Activated B cell treated with CpG ODN at 0.5 μM for 24 hours (primary cell): ENCODE measurements at regions of chr16 and their contacts with region 1.

Region 1: GRCh38 chr16:23556881-23557778 is at the starts of genes EARS2 and UBFD1:
- DNase-seq: peak; percentile 98
- ATAC-seq: peak; percentile 89
- H3K4me3 Mint-ChIP-seq: peak within 1 kb of the TSS; percentile 93
- H3K27ac Mint-ChIP-seq: peak within 1 kb of the TSS; percentile 89
- H3K4me1 Mint-ChIP-seq: peaks cover 30% of the 10 kb centered on the region
- H3K27me3 Mint-ChIP-seq: no peaks in the 10 kb centered on the region
- CTCF ChIP-seq: no peak
- total RNA-seq, gene EARS2: 24.9 and 27.5 TPM in 2 replicates
- total RNA-seq, gene UBFD1: 47.9 and 52.2 TPM in 2 replicates

Region 2: GRCh38 chr16:23149349-23149996 is 407.7 kb before region 1 on chr16 and contains the start of gene USP31:
- CTCF ChIA-PET with region 1: no interaction called
- POLR2A ChIA-PET with region 1: no interaction called
- intact Hi-C with region 1: loop called (anchors 1 kb)
- DNase-seq: peak; percentile 82
- ATAC-seq: peak; percentile 96
- H3K4me3 Mint-ChIP-seq: peak within 1 kb of the TSS; percentile 91
- H3K27ac Mint-ChIP-seq: peak within 1 kb of the TSS; percentile 81
- H3K4me1 Mint-ChIP-seq: peaks cover 11% of the 10 kb centered on the region
- H3K27me3 Mint-ChIP-seq: peaks cover 3% of the 10 kb centered on the region
- CTCF ChIP-seq: no peak
- total RNA-seq, gene USP31: 3.6 and 4.6 TPM in 2 replicates

Region 3: GRCh38 chr16:23452572-23453337 is 104.4 kb before region 1 on chr16 and contains the start of gene COG7:
- CTCF ChIA-PET with region 1: no interaction called
- POLR2A ChIA-PET with region 1: interaction called, 3 read pairs
- intact Hi-C with region 1: loop called (anchors 1 kb)
- DNase-seq: peak; percentile 86
- ATAC-seq: peak; percentile 88
- H3K4me3 Mint-ChIP-seq: peak within 1 kb of the TSS; percentile 93
- H3K27ac Mint-ChIP-seq: peak within 1 kb of the TSS; percentile 83
- H3K4me1 Mint-ChIP-seq: peaks cover 20% of the 10 kb centered on the region
- H3K27me3 Mint-ChIP-seq: no peaks in the 10 kb centered on the region
- CTCF ChIP-seq: no peak
- total RNA-seq, gene COG7: 19.3 and 20.2 TPM in 2 replicates

Region 4: GRCh38 chr16:23510164-23510914 is 46.8 kb before region 1 on chr16 and contains the start of gene GGA2:
- CTCF ChIA-PET with region 1: interaction called, 13 read pairs
- POLR2A ChIA-PET with region 1: interaction called, 14 read pairs
- intact Hi-C with region 1: loop called (anchors 1 kb)
- DNase-seq: peak; percentile 77
- ATAC-seq: peak; percentile 75
- H3K4me3 Mint-ChIP-seq: peak within 1 kb of the TSS; percentile 90
- H3K27ac Mint-ChIP-seq: peak within 1 kb of the TSS; percentile 95
- H3K4me1 Mint-ChIP-seq: peaks cover 59% of the 10 kb centered on the region
- H3K27me3 Mint-ChIP-seq: no peaks in the 10 kb centered on the region
- CTCF ChIP-seq: no peak
- total RNA-seq, gene GGA2: 264 and 281 TPM in 2 replicates

Region 5: GRCh38 chr16:23595951-23596720 is 39.0 kb after region 1 on chr16 and contains the start of gene NDUFAB1:
- CTCF ChIA-PET with region 1: interaction called, 28 read pairs
- POLR2A ChIA-PET with region 1: interaction called, 15 read pairs
- intact Hi-C with region 1: loop called (anchors 1 kb)
- DNase-seq: peak; percentile 95
- ATAC-seq: peak; percentile 99
- H3K4me3 Mint-ChIP-seq: peak within 1 kb of the TSS; percentile 88
- H3K27ac Mint-ChIP-seq: peak within 1 kb of the TSS; percentile 65
- H3K4me1 Mint-ChIP-seq: peaks cover 28% of the 10 kb centered on the region
- H3K27me3 Mint-ChIP-seq: no peaks in the 10 kb centered on the region
- CTCF ChIP-seq: peak; percentile 89
- total RNA-seq, gene NDUFAB1: 68.4 and 74.5 TPM in 2 replicates

Region 6: DNA sequence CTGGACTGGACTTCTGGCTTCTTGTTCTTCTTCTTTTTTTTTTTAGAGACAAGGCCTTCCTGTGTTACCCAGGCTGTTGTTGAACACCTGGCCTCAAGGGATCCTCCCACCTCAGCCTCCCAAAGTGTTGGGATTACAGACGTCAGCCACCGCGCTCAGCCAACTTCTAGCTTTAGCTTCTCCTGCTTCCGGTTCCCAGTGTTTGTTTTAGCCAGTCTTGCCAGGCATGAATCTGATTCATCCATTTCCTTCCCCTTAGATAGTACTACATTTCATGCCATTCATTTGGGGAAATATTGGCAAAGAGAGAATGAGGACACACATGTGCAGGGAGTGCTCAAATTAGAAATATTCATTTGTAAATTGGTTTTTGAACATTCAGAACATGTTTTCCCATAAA is 51.1 kb after region 1 on chr16:
- CTCF ChIA-PET with region 1: no interaction called
- POLR2A ChIA-PET with region 1: no interaction called
- intact Hi-C with region 1: no loop called
- DNase-seq: no peak
- ATAC-seq: no peak
- H3K4me3 Mint-ChIP-seq: no peak overlapping the region
- H3K27ac Mint-ChIP-seq: no peak overlapping the region
- H3K4me1 Mint-ChIP-seq: no peaks in the 10 kb centered on the region
- H3K27me3 Mint-ChIP-seq: no peaks in the 10 kb centered on the region
- CTCF ChIP-seq: no peak

Region 7: GRCh38 chr16:23694644-23695373 is 137.7 kb after region 1 on chr16:
- CTCF ChIA-PET with region 1: no interaction called
- POLR2A ChIA-PET with region 1: no interaction called
- intact Hi-C with region 1: no loop called
- DNase-seq: no peak
- ATAC-seq: no peak
- H3K4me3 Mint-ChIP-seq: peak overlapping the region; percentile 66
- H3K27ac Mint-ChIP-seq: no peak overlapping the region
- H3K4me1 Mint-ChIP-seq: peaks cover 17% of the 10 kb centered on the region
- H3K27me3 Mint-ChIP-seq: peaks cover 4% of the 10 kb centered on the region
- CTCF ChIP-seq: no peak

Region 8: DNA sequence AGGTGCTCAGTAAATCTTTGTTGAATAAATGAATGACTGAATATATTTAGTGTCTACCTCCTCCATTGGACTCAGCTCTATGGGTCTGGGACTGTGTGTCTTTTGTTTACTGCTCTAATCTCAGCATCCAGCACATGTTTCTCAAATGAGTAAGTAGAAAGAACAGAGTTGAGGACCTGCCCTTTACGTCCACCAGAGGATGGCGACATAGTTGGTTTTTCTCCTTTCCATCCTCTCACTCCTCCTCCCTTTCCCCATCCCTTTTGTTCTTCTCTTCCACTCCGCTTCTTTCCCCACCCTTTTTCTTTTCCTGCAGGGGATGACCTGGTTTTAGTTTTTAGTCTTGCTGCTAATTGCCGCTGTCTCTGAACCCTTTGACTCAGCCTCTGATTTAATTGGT is 185.6 kb after region 1 on chr16:
- CTCF ChIA-PET with region 1: no interaction called
- POLR2A ChIA-PET with region 1: no interaction called
- intact Hi-C with region 1: no loop called
- DNase-seq: no peak
- ATAC-seq: no peak
- H3K4me3 Mint-ChIP-seq: no peak overlapping the region
- H3K27ac Mint-ChIP-seq: no peak overlapping the region
- H3K4me1 Mint-ChIP-seq: no peaks in the 10 kb centered on the region
- H3K27me3 Mint-ChIP-seq: peaks cover 48% of the 10 kb centered on the region
- CTCF ChIP-seq: no peak

Region 9: DNA sequence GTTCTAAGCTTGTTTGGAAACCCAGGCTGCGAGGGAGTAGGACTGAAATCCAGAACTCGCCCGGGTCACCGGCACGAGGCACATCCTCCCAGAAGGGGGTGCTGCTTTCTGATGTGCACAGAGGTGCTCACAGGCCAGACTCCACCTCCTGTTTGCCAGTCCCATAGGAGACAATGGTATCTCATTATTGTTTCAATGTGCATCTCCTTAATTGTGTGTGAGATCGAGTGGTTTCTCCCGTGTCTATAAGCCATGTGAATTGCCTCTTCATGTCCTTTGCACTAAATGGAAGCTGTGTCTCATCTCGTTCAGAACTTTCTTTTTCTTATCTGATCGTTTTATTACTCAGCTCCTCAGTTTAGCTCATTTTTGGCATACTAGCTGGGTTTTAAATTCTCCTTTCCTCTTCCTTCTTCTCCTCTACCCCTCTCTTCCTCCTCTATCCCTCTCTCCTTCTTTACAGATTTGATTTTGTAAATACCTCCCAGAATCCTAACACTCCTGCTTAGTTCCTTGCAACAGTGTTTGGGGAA is 246.5 kb after region 1 on chr16:
- CTCF ChIA-PET with region 1: no interaction called
- POLR2A ChIA-PET with region 1: no interaction called
- intact Hi-C with region 1: no loop called
- DNase-seq: peak; percentile 48
- ATAC-seq: peak; percentile 82
- H3K4me3 Mint-ChIP-seq: peak overlapping the region; percentile 51
- H3K27ac Mint-ChIP-seq: peak overlapping the region; percentile 26
- H3K4me1 Mint-ChIP-seq: peaks cover 47% of the 10 kb centered on the region
- H3K27me3 Mint-ChIP-seq: no peaks in the 10 kb centered on the region
- CTCF ChIP-seq: no peak

Region 10: GRCh38 chr16:24539291-24539849 is 982.2 kb after region 1 on chr16 and contains the start of gene RBBP6:
- CTCF ChIA-PET with region 1: no interaction called
- POLR2A ChIA-PET with region 1: interaction called, 3 read pairs
- intact Hi-C with region 1: loop called (anchors 1 kb)
- DNase-seq: peak; percentile 96
- ATAC-seq: peak; percentile 92
- H3K4me3 Mint-ChIP-seq: peak within 1 kb of the TSS; percentile 100
- H3K27ac Mint-ChIP-seq: peak within 1 kb of the TSS; percentile 100
- H3K4me1 Mint-ChIP-seq: peaks cover 43% of the 10 kb centered on the region
- H3K27me3 Mint-ChIP-seq: no peaks in the 10 kb centered on the region
- CTCF ChIP-seq: no peak
- total RNA-seq, gene RBBP6: 85.3 and 85.8 TPM in 2 replicates